Vagina (tissue), 2 donors: ENCODE measurements at regions of chr7 and their contacts with region 1.

Region 1: DNA sequence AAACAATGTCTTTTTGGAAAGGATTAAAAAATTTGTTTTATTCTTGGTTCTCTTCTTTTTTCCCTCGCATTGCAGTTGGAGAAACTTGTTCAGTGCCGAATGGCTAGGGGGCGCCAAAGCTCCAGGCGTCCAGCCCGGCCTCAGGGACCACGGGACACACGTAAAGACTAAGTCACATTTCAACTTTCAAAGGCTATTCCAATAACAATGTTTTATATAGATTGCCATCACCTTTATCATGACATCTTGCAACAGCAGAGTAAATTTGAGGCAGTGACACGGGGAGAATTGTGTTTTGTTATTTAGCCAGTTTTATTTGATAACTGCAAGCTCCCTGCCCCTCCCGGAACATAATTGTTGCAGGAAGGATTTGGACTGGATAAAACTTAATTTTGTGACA is 2.2 kb upstream of the IGFBP3 start:
- DNase-seq: no peak
- H3K4me3 ChIP-seq: no peak overlapping the region
- H3K27ac ChIP-seq: peak overlapping the region; percentile 42
- H3K4me1 ChIP-seq: peaks cover 40% of the 10 kb centered on the region
- H3K27me3 ChIP-seq: no peaks in the 10 kb centered on the region
- CTCF ChIP-seq: peak; percentile 49 to 83 (median 82)
- POLR2A ChIP-seq: no peak

Region 2: DNA sequence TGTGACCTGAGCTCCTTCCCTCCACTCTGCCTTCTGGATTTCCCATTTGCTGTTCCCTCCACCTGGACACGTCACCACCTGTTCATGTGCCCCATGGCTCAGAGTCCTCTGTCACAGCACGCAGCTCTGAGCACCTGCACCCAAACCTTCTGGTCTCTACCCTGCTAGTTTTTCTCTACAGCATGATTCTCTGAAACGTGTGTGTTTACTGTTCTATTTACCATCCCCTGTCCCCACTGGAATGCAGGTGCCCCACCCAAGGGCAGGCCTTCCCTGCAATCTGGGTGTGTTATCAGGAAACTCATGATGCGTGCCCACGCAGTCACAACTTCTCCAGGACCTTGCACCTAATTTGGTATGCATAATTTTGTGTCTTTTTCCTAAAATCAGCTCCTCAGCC is 282.2 kb after region 1 on chr7:
- intact Hi-C with region 1: no loop called
- DNase-seq: no peak
- H3K4me3 ChIP-seq: no peak overlapping the region
- H3K27ac ChIP-seq: no peak overlapping the region
- H3K4me1 ChIP-seq: no peaks in the 10 kb centered on the region
- H3K27me3 ChIP-seq: no peaks in the 10 kb centered on the region
- CTCF ChIP-seq: no peak
- POLR2A ChIP-seq: no peak

Region 3: DNA sequence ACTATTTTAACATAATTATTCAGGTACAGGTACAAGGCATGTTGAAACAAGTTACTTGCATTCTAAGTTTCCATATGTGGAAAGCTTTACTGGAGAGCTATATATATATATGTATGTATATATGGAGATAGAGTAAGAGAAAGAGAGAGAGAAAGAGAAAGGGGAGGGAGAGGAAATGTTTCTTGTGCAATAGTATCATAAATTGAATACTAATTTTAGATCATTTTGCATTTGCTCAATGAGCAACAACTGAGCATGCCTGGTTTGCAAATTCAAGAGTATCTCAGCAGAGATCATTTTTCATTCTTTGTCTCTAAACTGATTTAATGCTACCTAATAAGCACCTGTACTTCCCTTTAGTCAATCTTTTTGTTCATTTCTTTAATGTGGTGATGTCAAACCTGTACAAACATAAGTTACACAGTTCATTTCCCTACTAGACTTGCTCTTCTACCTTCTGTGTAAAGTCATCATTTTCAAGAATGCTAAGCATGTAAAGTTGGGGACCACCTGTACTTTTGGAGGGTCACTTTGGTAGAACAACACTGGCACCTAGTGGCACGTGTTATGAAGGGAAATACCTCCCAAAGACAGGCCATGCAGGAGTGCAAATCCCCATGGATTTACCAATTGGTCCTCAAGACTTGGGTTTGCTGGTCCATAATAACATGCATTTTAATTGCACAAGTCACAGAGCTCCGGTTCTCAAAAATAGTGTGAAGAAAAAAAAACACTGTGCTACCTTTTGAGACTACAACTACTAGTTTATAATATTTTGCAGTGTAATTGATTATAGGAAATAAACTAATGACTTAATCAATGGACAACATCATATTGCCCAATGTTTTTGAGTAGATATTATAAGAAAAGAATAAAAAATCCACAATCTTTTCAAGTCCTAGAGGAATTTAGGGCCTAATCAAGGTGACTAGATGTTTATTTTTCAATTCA is 429.0 kb after region 1 on chr7:
- intact Hi-C with region 1: loop called (anchors 5 kb)
- DNase-seq: no peak
- H3K4me3 ChIP-seq: no peak overlapping the region
- H3K27ac ChIP-seq: no peak overlapping the region
- H3K4me1 ChIP-seq: no peaks in the 10 kb centered on the region
- H3K27me3 ChIP-seq: no peaks in the 10 kb centered on the region
- CTCF ChIP-seq: peak in 2 of 3 experiments; percentile 11 to 14
- POLR2A ChIP-seq: no peak

Region 4: GRCh38 chr7:47088329-47089067 is 1165.2 kb after region 1 on chr7:
- intact Hi-C with region 1: loop called (anchors 5 kb)
- DNase-seq: no peak
- H3K4me3 ChIP-seq: no peak overlapping the region
- H3K27ac ChIP-seq: peak overlapping the region; percentile 45
- H3K4me1 ChIP-seq: peaks cover 6% of the 10 kb centered on the region
- H3K27me3 ChIP-seq: no peaks in the 10 kb centered on the region
- CTCF ChIP-seq: peak; percentile 53 to 85 (median 83)
- POLR2A ChIP-seq: no peak